ENCODE measurements at regions of chr2 and their contacts with region 1.

Region 1: GRCh38 chr2:28247290-28247689 is 145.4 kb upstream of the FOSL2 start:
- DNase-seq: no peak
- ATAC-seq: no peak
- H3K4me3 ChIP-seq: no peak overlapping the region
- H3K27ac ChIP-seq: no peak overlapping the region
- H3K4me1 ChIP-seq: peaks cover 6% of the 10 kb centered on the region
- H3K27me3 ChIP-seq: no peaks in the 10 kb centered on the region

Region 2: GRCh38 chr2:27989141-27989540 is 258.1 kb before region 1 on chr2:
- intact Hi-C with region 1: loop called in 1 of 4 experiments (anchors 5 kb)
- DNase-seq: no peak
- ATAC-seq: no peak
- H3K4me3 ChIP-seq: no peak overlapping the region
- H3K27ac ChIP-seq: no peak overlapping the region
- H3K4me1 ChIP-seq: peaks cover 3% of the 10 kb centered on the region
- H3K27me3 ChIP-seq: no peaks in the 10 kb centered on the region

Region 3: GRCh38 chr2:28577791-28578680 is 330.7 kb after region 1 on chr2:
- intact Hi-C with region 1: no loop called
- DNase-seq: no peak
- ATAC-seq: no peak
- H3K4me3 ChIP-seq: no peak overlapping the region
- H3K27ac ChIP-seq: no peak overlapping the region
- H3K4me1 ChIP-seq: no peaks in the 10 kb centered on the region
- H3K27me3 ChIP-seq: no peaks in the 10 kb centered on the region